ENCODE measurements at regions of chr22 and their contacts with region 1.

Region 1: DNA sequence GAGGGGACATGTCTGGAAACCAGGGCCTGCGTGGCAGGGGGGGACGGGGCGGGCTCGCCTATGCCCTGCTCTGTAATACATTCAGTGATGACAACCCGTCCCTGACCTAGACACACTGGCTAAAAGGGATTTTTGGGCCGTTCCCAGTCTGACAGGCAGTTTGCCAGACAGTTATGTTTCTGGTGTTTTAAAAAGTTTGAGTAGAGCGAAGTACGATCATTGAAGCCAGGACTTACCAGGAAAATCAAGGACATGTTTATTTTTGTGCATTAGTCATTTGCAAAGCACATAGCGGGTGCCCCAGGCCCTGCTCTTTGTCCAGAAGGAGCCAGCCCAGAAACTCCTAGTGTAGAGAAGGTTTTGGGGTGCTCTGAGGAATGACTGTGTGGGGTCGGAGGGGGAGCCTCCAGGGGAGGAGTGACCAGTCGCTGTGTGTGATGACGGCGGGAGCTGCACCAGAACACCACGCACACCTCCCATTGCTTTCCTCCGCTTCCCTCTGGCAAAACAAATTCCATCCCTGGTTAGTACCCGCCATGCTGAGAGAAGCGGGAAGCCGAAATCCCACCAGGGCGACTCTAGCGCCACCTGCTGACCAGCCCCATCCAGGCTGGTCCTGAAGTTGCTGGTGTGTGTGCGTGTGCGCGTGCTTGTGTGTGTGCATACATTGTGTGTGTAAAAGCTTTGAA is 50.8 kb downstream of the FBLN1 start:
- DNase-seq: peak; percentile 93
- ATAC-seq: peak; percentile 46
- H3K4me3 ChIP-seq: no peak overlapping the region
- H3K27ac ChIP-seq: peak overlapping the region; percentile 89
- H3K4me1 ChIP-seq: peaks cover 41% of the 10 kb centered on the region
- H3K27me3 ChIP-seq: no peaks in the 10 kb centered on the region
- CTCF ChIP-seq: peak; percentile 98
- POLR2A ChIP-seq: no peak; the same call in 1 of the 2 replicates
- RAD21 ChIP-seq: peak; percentile 97

Region 2: DNA sequence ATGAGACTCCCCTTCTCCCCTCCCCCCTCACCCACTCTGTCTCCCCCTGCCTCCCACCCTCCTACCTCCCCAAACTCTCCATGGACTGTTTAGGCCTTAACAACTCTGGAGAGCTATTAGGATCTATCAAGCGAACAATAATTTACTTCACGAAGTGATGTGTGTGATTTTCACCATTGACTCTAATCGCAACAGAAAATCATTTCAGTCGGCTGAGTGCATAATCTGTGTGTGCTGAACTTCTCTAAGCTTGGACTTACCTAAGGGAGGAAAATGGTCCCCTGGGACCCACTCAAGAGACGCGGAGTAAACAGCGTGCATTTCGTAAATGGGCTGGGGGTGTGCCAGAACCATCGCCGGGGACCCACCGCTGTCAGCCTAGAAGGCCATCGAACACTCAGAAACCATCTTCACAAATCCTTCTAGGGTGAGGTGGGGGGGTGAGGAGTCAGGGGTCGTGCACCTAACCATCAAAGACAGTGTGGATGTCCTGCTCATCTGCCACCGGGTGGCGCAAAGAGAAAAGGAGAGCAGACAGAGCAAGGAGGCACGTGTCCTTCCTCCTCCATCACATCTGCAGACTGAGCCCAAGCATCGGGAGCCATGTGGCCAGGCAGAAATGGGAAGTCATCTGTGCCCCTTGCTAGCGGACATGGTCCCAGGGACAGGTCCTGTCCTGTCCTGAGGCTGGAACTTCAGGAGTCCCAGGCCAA is 451.8 kb before region 1 on chr22:
- CTCF ChIA-PET with region 1: no interaction called
- POLR2A ChIA-PET with region 1: no interaction called
- dilution Hi-C with region 1: no loop called
- in situ Hi-C with region 1: no loop called
- intact Hi-C with region 1: loop called (anchors 10 kb)
- DNase-seq: peak; percentile 72
- ATAC-seq: peak; percentile 76
- H3K4me3 ChIP-seq: no peak overlapping the region
- H3K27ac ChIP-seq: no peak overlapping the region
- H3K4me1 ChIP-seq: no peaks in the 10 kb centered on the region
- H3K27me3 ChIP-seq: peaks cover 6% of the 10 kb centered on the region
- CTCF ChIP-seq: peak; percentile 72
- POLR2A ChIP-seq: no peak
- RAD21 ChIP-seq: peak; percentile 82

Region 3: GRCh38 chr22:45318168-45318557 is 235.3 kb before region 1 on chr22:
- CTCF ChIA-PET with region 1: no interaction called
- POLR2A ChIA-PET with region 1: no interaction called
- dilution Hi-C with region 1: no loop called
- in situ Hi-C with region 1: no loop called
- intact Hi-C with region 1: loop called (anchors 1 kb)
- DNase-seq: peak; percentile 97
- ATAC-seq: peak; percentile 79
- H3K4me3 ChIP-seq: peak overlapping the region; percentile 10; the same call in 1 of the 2 replicates
- H3K27ac ChIP-seq: peak overlapping the region; percentile 75
- H3K4me1 ChIP-seq: peaks cover 22% of the 10 kb centered on the region
- H3K27me3 ChIP-seq: no peaks in the 10 kb centered on the region
- CTCF ChIP-seq: no peak
- POLR2A ChIP-seq: 0 out of 2 replicates have a peak, but pooled peaks have one; percentile 10
- RAD21 ChIP-seq: no peak

Region 4: DNA sequence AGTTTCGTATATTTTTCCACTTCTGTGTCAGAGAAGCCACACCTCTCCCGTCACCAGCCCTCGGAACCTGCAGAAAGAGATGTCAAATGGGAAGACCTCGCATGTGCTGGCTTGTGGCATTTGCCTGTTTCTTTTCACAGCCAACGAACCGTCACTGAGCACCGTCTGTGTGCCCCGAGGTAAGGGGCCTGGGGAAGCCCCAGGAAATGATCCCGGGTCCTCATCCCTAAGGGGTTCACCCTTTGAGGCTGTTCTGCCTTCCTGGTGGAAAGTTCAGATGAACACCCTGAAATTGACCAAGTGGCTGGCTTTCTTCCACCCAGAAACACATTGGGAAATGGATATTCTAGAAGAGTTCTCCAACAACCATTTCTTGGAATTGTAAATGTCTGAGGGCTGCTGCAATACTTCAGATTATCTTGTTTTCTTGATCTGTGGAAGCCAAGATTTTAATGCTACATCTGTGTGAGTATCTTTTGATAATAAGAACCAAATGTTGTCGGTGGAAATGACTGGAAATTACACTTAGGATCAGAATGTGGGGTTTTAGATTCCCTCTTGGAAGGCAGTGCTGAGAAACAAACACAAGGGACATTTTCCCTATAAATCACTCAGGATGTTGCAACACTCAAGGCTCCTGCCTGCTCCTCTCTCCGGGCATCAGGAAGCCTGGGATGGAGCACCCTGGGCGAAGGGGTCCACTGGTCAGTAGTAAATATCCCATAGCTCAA is 102.4 kb before region 1 on chr22:
- CTCF ChIA-PET with region 1: no interaction called
- POLR2A ChIA-PET with region 1: no interaction called
- dilution Hi-C with region 1: no loop called
- in situ Hi-C with region 1: loop called (anchors 5 kb)
- intact Hi-C with region 1: no loop called
- DNase-seq: peak; percentile 97
- ATAC-seq: peak; percentile 79
- H3K4me3 ChIP-seq: no peak overlapping the region
- H3K27ac ChIP-seq: peak overlapping the region; percentile 100
- H3K4me1 ChIP-seq: peaks cover 37% of the 10 kb centered on the region
- H3K27me3 ChIP-seq: no peaks in the 10 kb centered on the region
- CTCF ChIP-seq: no peak
- POLR2A ChIP-seq: no peak
- RAD21 ChIP-seq: no peak

Region 5: GRCh38 chr22:45518580-45519026 is 34.9 kb before region 1 on chr22:
- CTCF ChIA-PET with region 1: no interaction called
- POLR2A ChIA-PET with region 1: no interaction called
- dilution Hi-C with region 1: no loop called
- in situ Hi-C with region 1: no loop called
- intact Hi-C with region 1: no loop called
- DNase-seq: no peak
- ATAC-seq: no peak
- H3K4me3 ChIP-seq: no peak overlapping the region
- H3K27ac ChIP-seq: no peak overlapping the region
- H3K4me1 ChIP-seq: peaks cover 21% of the 10 kb centered on the region
- H3K27me3 ChIP-seq: no peaks in the 10 kb centered on the region
- CTCF ChIP-seq: no peak
- POLR2A ChIP-seq: no peak
- RAD21 ChIP-seq: no peak

Region 6: GRCh38 chr22:45584121-45584570 is 30.7 kb after region 1 on chr22:
- CTCF ChIA-PET with region 1: no interaction called
- POLR2A ChIA-PET with region 1: no interaction called
- dilution Hi-C with region 1: no loop called
- in situ Hi-C with region 1: no loop called
- intact Hi-C with region 1: loop called (anchors 1 kb)
- DNase-seq: peak; percentile 72
- ATAC-seq: peak; percentile 30
- H3K4me3 ChIP-seq: no peak overlapping the region
- H3K27ac ChIP-seq: no peak overlapping the region
- H3K4me1 ChIP-seq: peaks cover 22% of the 10 kb centered on the region
- H3K27me3 ChIP-seq: no peaks in the 10 kb centered on the region
- CTCF ChIP-seq: no peak
- POLR2A ChIP-seq: no peak
- RAD21 ChIP-seq: no peak

Region 7: DNA sequence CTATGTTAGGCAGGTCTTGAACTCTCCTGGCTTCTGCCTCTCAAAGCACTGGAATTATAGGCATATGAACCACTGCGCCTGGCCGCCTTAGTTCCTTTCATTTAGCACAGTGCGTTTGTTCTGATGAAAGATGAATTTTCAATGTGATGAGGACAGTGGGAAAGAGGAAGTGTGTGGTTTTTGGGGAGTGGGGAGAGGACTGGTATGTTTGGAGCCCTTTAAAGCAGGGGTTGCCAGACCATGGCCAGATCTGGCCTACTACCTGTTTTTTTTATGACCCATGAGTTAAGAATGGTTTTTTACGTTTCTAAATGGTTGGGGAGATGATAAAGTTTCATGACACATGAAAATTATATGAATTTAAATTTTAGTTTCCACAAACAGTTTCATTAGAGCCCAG is 130.7 kb after region 1 on chr22:
- CTCF ChIA-PET with region 1: no interaction called
- POLR2A ChIA-PET with region 1: no interaction called
- dilution Hi-C with region 1: no loop called
- in situ Hi-C with region 1: no loop called
- intact Hi-C with region 1: no loop called
- DNase-seq: peak; percentile 46
- ATAC-seq: no peak
- H3K4me3 ChIP-seq: no peak overlapping the region
- H3K27ac ChIP-seq: 0 out of 2 replicates have a peak overlapping the region, but pooled peaks have one; percentile 44
- H3K4me1 ChIP-seq: peaks cover 41% of the 10 kb centered on the region
- H3K27me3 ChIP-seq: no peaks in the 10 kb centered on the region
- CTCF ChIP-seq: no peak
- POLR2A ChIP-seq: no peak
- RAD21 ChIP-seq: no peak

Measured in IMR-90 (cell line).